PC-9 (cell line): ENCODE measurements at regions of chr5 and their contacts with region 1.

Region 1: GRCh38 chr5:137833463-137833862 is 34.2 kb upstream of the MYOT start:
- DNase-seq: peak; percentile 59 to 97
- H3K4me3 ChIP-seq: no peak overlapping the region
- H3K27ac ChIP-seq: peak overlapping the region; percentile 67
- H3K4me1 ChIP-seq: peaks cover 32% of the 10 kb centered on the region
- H3K27me3 ChIP-seq: no peaks in the 10 kb centered on the region
- CTCF ChIP-seq: no peak

Region 2: GRCh38 chr5:137888857-137889759 is 55.6 kb after region 1 on chr5 and contains the start of gene PKD2L2:
- CTCF ChIA-PET with region 1: no interaction called
- POLR2A ChIA-PET with region 1: interaction called, 6 read pairs
- intact Hi-C with region 1: loop called (anchors 2 kb)
- DNase-seq: peak; percentile 75 to 87
- H3K4me3 ChIP-seq: peak within 1 kb of the TSS; percentile 67
- H3K27ac ChIP-seq: peak within 1 kb of the TSS; percentile 63
- H3K4me1 ChIP-seq: peaks cover 29% of the 10 kb centered on the region
- H3K27me3 ChIP-seq: no peaks in the 10 kb centered on the region
- CTCF ChIP-seq: no peak
- total RNA-seq, gene PKD2L2: 0.46 and 0.50 TPM in 2 replicates